ENCODE measurements at regions of chr1 and their contacts with region 1.

Region 1: GRCh38 chr1:154607609-154608396 is at the start of gene ADAR:
- DNase-seq: peak; percentile 97
- H3K4me3 Mint-ChIP-seq: peak within 1 kb of the TSS; percentile 91
- H3K27ac Mint-ChIP-seq: peak within 1 kb of the TSS; percentile 96
- H3K4me1 Mint-ChIP-seq: peaks cover 75% of the 10 kb centered on the region
- H3K27me3 Mint-ChIP-seq: no peaks in the 10 kb centered on the region
- total RNA-seq, gene ADAR: 301 to 313 TPM

Region 2: GRCh38 chr1:154619181-154619948 is 11.6 kb after region 1 on chr1:
- CTCF ChIA-PET with region 1: interaction called, 10 read pairs
- intact Hi-C with region 1: no loop called
- DNase-seq: no peak
- H3K4me3 Mint-ChIP-seq: no peak overlapping the region
- H3K27ac Mint-ChIP-seq: no peak overlapping the region
- H3K4me1 Mint-ChIP-seq: peaks cover 60% of the 10 kb centered on the region
- H3K27me3 Mint-ChIP-seq: no peaks in the 10 kb centered on the region

Region 3: DNA sequence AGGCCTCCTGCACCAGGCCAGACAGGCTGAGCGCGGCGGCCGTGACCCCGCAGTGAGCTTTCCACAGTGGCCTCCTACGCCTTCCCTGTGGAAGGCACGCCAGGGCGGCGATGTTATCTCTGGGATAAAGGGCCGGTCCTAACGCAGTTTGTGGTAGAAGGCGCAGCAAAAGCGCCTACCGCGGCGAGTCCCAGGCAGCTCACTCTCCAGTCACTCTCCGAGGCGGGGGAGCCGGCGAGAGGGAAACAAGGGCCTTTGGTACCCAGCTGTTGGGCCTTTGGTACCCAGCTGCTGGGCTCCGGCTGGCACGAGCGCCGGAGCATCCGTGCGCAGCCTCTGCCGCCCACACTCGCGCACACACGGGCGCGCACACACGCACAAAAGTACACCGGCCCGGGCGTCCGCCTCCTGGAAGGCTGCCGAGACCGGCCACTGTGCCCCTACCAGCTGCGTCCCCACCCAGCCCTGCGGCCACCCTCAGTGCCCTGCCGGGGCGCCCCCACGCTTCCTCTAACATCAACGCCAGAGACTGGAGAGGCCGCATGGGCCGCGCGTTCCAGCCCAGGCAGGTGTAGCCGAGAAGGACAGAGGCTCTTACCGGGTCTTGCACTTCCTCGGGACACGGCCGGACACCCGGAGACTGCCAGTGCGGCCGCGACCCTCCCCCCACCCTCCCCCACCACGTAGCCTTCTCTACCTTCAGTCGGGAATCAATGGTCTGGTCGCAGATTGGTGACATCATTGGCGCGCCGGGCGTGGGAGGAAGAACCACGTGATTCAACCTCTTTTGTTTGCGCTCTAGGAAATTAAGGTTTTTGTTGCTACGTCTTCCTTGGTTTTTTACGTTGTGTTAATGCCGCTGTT is 19.7 kb after region 1 on chr1:
- CTCF ChIA-PET with region 1: interaction called, 10 read pairs
- intact Hi-C with region 1: loop called (anchors 1 kb)
- DNase-seq: peak; percentile 97
- H3K4me3 Mint-ChIP-seq: peak overlapping the region; percentile 98
- H3K27ac Mint-ChIP-seq: peak overlapping the region; percentile 99
- H3K4me1 Mint-ChIP-seq: peaks cover 41% of the 10 kb centered on the region
- H3K27me3 Mint-ChIP-seq: no peaks in the 10 kb centered on the region

Region 4: GRCh38 chr1:154784924-154785531 is 177.2 kb after region 1 on chr1:
- CTCF ChIA-PET with region 1: no interaction called
- intact Hi-C with region 1: loop called (anchors 1 kb)
- DNase-seq: peak; percentile 85
- H3K4me3 Mint-ChIP-seq: peak overlapping the region; percentile 54
- H3K27ac Mint-ChIP-seq: peak overlapping the region; percentile 98
- H3K4me1 Mint-ChIP-seq: peaks cover 38% of the 10 kb centered on the region
- H3K27me3 Mint-ChIP-seq: no peaks in the 10 kb centered on the region

Region 5: GRCh38 chr1:154802982-154803920 is 195.4 kb after region 1 on chr1:
- CTCF ChIA-PET with region 1: no interaction called
- intact Hi-C with region 1: no loop called
- DNase-seq: no peak
- H3K4me3 Mint-ChIP-seq: no peak overlapping the region
- H3K27ac Mint-ChIP-seq: no peak overlapping the region
- H3K4me1 Mint-ChIP-seq: no peaks in the 10 kb centered on the region
- H3K27me3 Mint-ChIP-seq: peaks cover 4% of the 10 kb centered on the region

Measured in activated naive CD4-positive, alpha-beta T cell treated with anti-CD3 and anti-CD28 coated beads for 36 hours (primary cell).